ENCODE measurements at regions of chr2 and their contacts with region 1.

Region 1: DNA sequence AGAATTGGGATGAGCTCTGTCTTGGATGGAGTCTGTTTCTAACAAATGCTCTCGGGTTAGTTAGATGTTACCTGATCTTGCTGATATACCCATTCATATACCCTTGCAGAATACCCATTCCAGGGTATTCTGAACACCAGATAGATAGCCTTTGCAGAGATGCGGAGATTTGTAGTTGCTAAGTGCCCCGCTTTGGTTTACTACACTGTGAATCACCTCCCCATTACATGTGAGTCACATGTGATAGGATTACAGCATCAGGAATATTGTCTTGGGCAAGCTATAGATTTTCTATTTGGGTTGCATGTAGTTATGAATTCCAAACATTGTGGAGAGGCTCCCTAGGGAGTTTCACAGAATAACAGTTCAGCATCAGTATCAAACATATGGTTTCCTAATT is 3.8 kb downstream of the VSNL1 start:
- DNase-seq: peak; percentile 48
- ATAC-seq: no peak
- H3K4me3 ChIP-seq: peak overlapping the region; percentile 78 to 97 (median 83); a peak in 5 of 6 replicates
- H3K27ac ChIP-seq: peak overlapping the region; percentile 94
- H3K4me1 ChIP-seq: peaks cover 66% of the 10 kb centered on the region
- H3K27me3 ChIP-seq: peaks cover 0 to 3% of the 10 kb centered on the region in 2 experiments; a peak in 1 of 5 replicates
- CTCF ChIP-seq: no peak
- EP300 ChIP-seq: no peak; a peak in 1 of 4 replicates
- POLR2A ChIP-seq: 0 out of 4 replicates have a peak, but pooled peaks of 1 of the 2 experiments have one; percentile 19
- RAD21 ChIP-seq: no peak

Region 2: DNA sequence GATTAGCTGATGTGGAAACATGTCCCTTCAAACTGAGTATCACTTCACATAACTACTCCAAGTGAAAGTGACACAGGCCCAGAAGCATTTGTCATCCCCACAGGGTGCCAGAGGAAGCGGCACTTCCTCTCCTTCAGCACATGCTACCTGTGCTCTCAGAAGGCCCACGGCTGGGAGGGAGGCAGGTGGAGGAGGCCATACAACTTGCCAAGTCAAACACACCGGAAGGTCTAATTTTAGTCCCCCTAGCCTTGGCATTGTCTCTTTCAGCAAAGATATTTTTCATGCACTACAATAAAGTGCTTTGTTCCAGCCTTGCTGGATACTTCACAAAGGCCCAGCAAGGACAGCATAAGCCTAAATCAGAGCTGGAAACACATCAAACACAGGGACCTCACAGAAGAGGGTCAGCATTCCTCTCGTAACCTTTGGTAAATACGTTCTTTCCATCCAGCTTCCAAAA is 34.2 kb after region 1 on chr2:
- CTCF ChIA-PET with region 1: no interaction called
- POLR2A ChIA-PET with region 1: interaction called, 19 read pairs
- in situ Hi-C with region 1: no loop called
- intact Hi-C with region 1: loop called (anchors 1 kb)
- DNase-seq: peak; percentile 96
- ATAC-seq: peak; percentile 91
- H3K4me3 ChIP-seq: no peak overlapping the region; a peak in 1 of 6 replicates
- H3K27ac ChIP-seq: peak overlapping the region; percentile 51
- H3K4me1 ChIP-seq: peaks cover 66% of the 10 kb centered on the region
- H3K27me3 ChIP-seq: no peaks in the 10 kb centered on the region
- CTCF ChIP-seq: no peak
- EP300 ChIP-seq: peak in 1 of 2 experiments; percentile 74; a peak in 2 of 4 replicates
- POLR2A ChIP-seq: no peak
- RAD21 ChIP-seq: no peak

Measured in HepG2 (cell line).